ENCODE measurements at regions of chr1 and their contacts with region 1.

Region 1: GRCh38 chr1:212608209-212608955 is at the start of gene ATF3:
- DNase-seq: peak; percentile 97
- H3K4me3 Mint-ChIP-seq: peak within 1 kb of the TSS; percentile 90
- H3K27ac Mint-ChIP-seq: peak within 1 kb of the TSS; percentile 96
- H3K4me1 Mint-ChIP-seq: peaks cover 50% of the 10 kb centered on the region
- H3K27me3 Mint-ChIP-seq: peaks cover 38% of the 10 kb centered on the region
- total RNA-seq, gene ATF3: 21.2 and 29.5 TPM in 2 replicates

Region 2: GRCh38 chr1:211578640-211579433 is 1029.5 kb before region 1 on chr1 and contains the start of gene SLC30A1:
- intact Hi-C with region 1: loop called (anchors 5 kb)
- DNase-seq: peak; percentile 100
- H3K4me3 Mint-ChIP-seq: peak within 1 kb of the TSS; percentile 92
- H3K27ac Mint-ChIP-seq: peak within 1 kb of the TSS; percentile 87
- H3K4me1 Mint-ChIP-seq: peaks cover 33% of the 10 kb centered on the region
- H3K27me3 Mint-ChIP-seq: peaks cover 4% of the 10 kb centered on the region
- total RNA-seq, gene SLC30A1: 8.5 and 9.0 TPM in 2 replicates

Region 3: GRCh38 chr1:212035123-212035834 is 573.1 kb before region 1 on chr1 and contains the starts of genes DTL and INTS7:
- intact Hi-C with region 1: loop called (anchors 10 kb)
- DNase-seq: peak; percentile 100
- H3K4me3 Mint-ChIP-seq: peak within 1 kb of the TSS; percentile 98
- H3K27ac Mint-ChIP-seq: peak within 1 kb of the TSS; percentile 99
- H3K4me1 Mint-ChIP-seq: peaks cover 60% of the 10 kb centered on the region
- H3K27me3 Mint-ChIP-seq: peaks cover 3% of the 10 kb centered on the region
- total RNA-seq, gene DTL: 90.4 and 99.5 TPM in 2 replicates
- total RNA-seq, gene INTS7: 34.4 and 36.8 TPM in 2 replicates

Region 4: DNA sequence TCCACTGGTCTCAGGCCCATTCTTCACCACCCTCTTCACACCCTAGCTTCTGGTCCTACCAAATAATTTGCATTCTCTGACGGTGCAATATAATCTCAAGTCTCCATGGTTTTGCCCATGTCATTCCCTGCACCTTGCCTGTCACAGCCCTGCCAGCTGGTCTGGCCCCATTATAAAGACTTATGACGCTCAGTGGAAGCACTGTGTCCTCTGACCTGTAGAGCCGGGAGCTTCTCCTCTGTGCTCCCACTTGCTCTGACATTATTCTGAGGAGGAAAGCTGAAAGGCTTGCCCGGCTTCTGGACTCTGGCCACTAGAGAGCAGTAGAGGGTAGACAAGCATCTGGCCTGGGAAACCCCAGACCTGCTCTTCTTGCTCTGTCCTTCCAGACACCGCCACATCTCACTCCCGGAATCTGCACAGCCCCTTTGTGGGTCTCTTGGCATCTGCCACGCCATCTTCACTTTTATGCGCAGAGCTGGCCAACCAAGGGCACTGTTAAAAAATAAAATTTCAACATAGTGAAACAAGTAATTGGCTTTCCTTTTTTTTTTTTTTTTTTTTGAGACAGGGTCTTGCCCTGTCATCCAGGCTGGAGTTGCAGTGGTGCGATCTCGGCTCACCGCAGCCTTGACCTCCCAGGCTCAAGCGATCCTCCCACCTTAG is 131.2 kb before region 1 on chr1:
- intact Hi-C with region 1: loop called (anchors 2 kb)
- DNase-seq: peak; percentile 93
- H3K4me3 Mint-ChIP-seq: no peak overlapping the region
- H3K27ac Mint-ChIP-seq: peak overlapping the region; percentile 2
- H3K4me1 Mint-ChIP-seq: peaks cover 13% of the 10 kb centered on the region
- H3K27me3 Mint-ChIP-seq: peaks cover 26% of the 10 kb centered on the region

Region 5: DNA sequence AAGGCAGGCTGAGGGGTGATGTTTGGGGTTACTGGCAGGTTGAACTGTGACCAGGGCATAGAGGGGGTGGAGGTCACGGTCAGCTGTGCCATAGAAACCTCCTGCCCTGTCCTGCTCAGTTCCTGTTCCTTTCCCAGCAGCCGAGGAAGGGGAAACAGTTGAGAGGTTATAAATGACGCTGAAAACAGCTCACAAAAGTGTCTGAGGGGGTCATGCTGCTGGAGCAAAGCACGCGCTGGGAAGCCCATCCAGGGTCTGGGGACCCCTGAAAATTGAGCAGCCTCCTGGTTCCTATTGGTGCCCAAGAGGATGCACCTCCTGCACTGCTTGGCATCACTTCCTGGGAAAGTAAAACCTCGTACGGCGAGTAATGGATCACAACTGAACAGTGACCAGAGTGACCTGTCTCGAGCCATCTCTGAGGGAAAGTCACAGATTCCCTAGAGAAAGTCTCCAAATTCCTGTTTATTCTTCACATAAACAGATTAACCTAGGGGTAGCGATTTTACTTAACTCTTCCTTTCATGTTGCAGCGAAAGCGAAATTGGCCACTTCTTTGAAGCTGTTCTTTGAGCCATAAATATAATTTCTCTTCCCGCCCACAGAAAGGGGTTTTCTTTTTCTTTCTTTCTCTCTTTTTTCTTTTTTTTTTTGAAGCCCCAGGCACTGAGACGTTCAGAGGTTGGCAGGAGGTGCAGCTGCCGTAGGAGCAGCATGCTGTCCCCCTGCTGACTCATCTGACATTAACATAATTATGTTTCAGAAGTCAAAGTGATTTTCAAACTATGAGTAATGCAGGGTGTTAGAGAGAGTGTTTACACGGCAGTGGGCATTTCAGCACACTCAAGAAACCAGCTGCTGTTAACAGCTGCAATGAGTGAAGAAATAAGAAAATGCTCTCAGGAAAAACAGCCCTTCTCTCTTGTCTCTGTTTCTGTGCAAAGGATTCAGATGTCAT is 41.6 kb before region 1 on chr1:
- intact Hi-C with region 1: loop called (anchors 1 kb)
- DNase-seq: peak; percentile 86
- H3K4me3 Mint-ChIP-seq: peak overlapping the region; percentile 81
- H3K27ac Mint-ChIP-seq: peak overlapping the region; percentile 89
- H3K4me1 Mint-ChIP-seq: peaks cover 27% of the 10 kb centered on the region
- H3K27me3 Mint-ChIP-seq: peaks cover 35% of the 10 kb centered on the region

Region 6: DNA sequence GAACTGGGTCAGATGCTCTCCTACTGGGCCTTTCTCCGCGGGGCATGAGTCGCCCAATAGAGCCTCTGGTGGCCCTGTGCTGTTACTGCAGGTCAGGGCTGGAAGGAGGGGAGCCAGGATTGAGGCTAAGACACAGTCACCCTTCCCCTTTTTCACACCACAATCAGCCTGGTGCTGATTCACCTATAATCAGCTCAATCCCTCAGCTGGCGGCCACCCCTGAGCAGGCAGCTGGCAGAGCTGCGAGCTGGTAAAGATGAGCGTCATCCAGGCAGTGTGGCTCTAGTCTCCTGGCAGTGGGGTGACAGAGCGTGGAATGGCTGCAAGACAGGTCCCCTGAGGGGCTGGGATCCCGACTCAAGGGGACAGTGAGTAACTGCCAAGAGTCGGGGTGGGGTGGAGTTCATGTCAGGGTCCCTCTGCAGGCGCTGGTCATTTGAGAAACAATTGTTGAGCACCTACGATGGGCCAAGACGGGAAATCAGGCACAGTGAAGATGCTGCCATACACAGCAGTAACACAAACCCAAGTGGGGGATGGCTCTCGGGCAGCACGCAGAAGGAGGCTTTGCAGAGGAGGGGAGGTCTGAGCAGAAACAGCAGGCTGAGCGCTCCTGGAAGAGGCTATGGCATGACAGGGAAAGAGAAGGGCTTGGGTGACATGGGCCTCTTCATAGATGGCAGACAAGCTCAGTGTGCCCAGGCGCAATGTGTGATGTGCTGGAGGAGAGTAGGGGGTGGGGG is 21.9 kb after region 1 on chr1:
- intact Hi-C with region 1: loop called (anchors 2 kb)
- DNase-seq: peak; percentile 88
- H3K4me3 Mint-ChIP-seq: no peak overlapping the region
- H3K27ac Mint-ChIP-seq: no peak overlapping the region
- H3K4me1 Mint-ChIP-seq: peaks cover 6% of the 10 kb centered on the region
- H3K27me3 Mint-ChIP-seq: peaks cover 10% of the 10 kb centered on the region

Region 7: DNA sequence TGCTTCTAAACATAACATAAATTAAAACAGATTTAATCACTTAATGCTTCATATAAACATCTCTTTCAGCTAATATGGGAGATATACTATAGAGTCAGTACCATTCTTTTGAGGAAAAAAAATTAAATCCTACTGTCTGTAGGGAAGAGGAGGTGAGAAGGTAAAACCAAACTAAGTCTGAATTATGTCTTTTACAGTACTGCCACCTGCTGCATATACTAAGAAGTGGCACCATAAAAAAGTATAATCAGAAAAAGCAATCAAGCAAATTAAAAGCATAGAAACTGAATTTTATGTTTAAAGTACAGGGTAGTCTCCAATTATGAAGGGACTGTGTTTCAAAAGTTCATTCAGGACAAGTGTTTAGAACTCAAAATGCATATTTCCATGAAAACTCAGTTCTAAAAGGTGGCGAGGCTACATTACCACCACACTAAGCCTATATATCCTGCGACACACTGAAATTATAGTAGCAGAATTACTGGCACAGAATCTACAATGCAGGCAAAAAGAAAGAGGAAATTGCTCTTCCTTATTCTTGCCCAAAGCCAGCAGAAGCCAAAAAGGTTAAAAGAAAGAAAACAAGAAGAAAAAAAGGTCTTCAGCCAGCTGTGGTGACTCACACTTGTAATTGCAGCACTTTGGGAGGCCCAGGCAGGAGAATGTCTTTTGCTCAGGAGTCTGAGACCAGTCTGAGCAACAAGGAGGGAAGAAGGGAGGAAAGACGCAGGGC is 174.2 kb after region 1 on chr1:
- intact Hi-C with region 1: loop called (anchors 2 kb)
- DNase-seq: no peak
- H3K4me3 Mint-ChIP-seq: no peak overlapping the region
- H3K27ac Mint-ChIP-seq: no peak overlapping the region
- H3K4me1 Mint-ChIP-seq: peaks cover 8% of the 10 kb centered on the region
- H3K27me3 Mint-ChIP-seq: no peaks in the 10 kb centered on the region